ENCODE measurements at regions of chr17 and their contacts with region 1.

Region 1: DNA sequence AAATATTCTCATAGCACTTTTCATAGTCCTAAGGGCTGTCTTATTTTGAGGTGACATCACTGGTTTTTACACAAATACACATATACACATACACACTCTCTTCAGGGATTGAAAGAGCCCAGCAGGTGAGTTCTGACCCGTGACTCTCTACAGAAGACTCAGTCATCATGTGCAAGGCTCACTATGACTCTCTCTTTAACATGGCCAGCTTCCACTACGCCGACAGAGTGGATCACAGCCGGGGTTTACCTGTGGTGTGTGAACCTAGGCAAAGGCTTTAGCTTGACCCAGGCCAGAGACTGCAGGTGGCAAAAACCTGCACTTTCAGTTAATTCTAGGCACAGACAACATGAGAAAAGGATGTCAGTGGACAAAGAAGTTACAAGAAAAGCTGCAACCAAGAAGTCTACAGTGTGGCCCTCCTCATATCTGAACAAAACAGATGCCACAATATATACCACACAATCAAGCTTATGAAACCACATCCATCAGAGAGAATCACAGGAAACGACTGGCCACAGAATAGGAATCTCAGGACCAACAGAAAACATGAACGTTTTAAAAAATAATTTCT is 56.5 kb downstream of the CYTH1 start:
- DNase-seq: peak in 3 of 35 experiments; percentile 2 to 61 (median 29)
- ATAC-seq: peak; percentile 54 to 71 (median 59)
- H3K4me3 ChIP-seq: peak overlapping the region in 1 of 2 donors; percentile 52
- H3K4me3 Mint-ChIP-seq: peak overlapping the region; percentile 62 to 80 (median 74)
- H3K27ac ChIP-seq: peak overlapping the region; percentile 44
- H3K27ac Mint-ChIP-seq: peak overlapping the region; percentile 87 to 91
- H3K4me1 ChIP-seq: peaks cover 68 to 97% of the 10 kb centered on the region in 2 experiments
- H3K4me1 Mint-ChIP-seq: peaks cover 93% of the 10 kb centered on the region in 3 donors
- H3K27me3 ChIP-seq: no peaks in the 10 kb centered on the region
- H3K27me3 Mint-ChIP-seq: no peaks in the 10 kb centered on the region

Region 2: GRCh38 chr17:78641243-78641642 is 84.3 kb before region 1 on chr17:
- CTCF ChIA-PET with region 1: no interaction called
- POLR2A ChIA-PET with region 1: no interaction called
- DNase-seq: no peak
- ATAC-seq: no peak
- H3K4me3 ChIP-seq: no peak overlapping the region
- H3K4me3 Mint-ChIP-seq: no peak overlapping the region
- H3K27ac ChIP-seq: no peak overlapping the region
- H3K27ac Mint-ChIP-seq: no peak overlapping the region
- H3K4me1 ChIP-seq: peaks cover 0 to 9% of the 10 kb centered on the region in 2 experiments
- H3K4me1 Mint-ChIP-seq: peaks cover 13 to 24% (median 13%) of the 10 kb centered on the region in 3 donors
- H3K27me3 ChIP-seq: peaks cover 0 to 16% of the 10 kb centered on the region in 2 experiments
- H3K27me3 Mint-ChIP-seq: peaks cover 0 to 2% of the 10 kb centered on the region in 2 donors

Region 3: DNA sequence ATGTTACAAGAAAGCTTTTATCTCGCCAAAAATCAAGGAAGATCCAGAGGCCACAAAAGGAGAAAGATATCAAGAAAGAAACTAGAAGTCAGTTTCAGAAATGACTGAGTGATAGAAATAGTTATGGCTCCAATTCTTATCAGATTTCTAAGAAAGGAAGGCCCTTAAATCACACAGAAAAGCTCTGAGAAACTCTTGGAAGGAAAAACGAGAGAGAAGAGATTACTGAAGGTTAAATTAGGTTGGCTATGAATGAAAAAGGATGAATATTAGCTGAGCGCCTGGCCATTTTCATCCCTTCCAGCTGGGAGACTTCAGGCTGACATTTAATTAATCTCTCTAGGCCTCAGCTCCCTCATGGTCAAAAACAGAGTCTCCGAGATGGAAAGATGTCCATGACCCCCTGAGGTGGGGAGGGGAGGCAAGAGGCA is 15.8 kb before region 1 on chr17:
- CTCF ChIA-PET with region 1: interaction called in 1 of 2 experiments, 5 read pairs
- POLR2A ChIA-PET with region 1: interaction called, 4 to 11 read pairs
- DNase-seq: no peak
- ATAC-seq: no peak
- H3K4me3 ChIP-seq: no peak overlapping the region
- H3K4me3 Mint-ChIP-seq: peak overlapping the region; percentile 49 to 54 (median 50)
- H3K27ac ChIP-seq: peak overlapping the region; percentile 51
- H3K27ac Mint-ChIP-seq: peak overlapping the region; percentile 81 to 91
- H3K4me1 ChIP-seq: peaks cover 24 to 54% of the 10 kb centered on the region in 2 experiments
- H3K4me1 Mint-ChIP-seq: peaks cover 70 to 78% (median 75%) of the 10 kb centered on the region in 3 donors
- H3K27me3 ChIP-seq: no peaks in the 10 kb centered on the region
- H3K27me3 Mint-ChIP-seq: no peaks in the 10 kb centered on the region

Region 4: DNA sequence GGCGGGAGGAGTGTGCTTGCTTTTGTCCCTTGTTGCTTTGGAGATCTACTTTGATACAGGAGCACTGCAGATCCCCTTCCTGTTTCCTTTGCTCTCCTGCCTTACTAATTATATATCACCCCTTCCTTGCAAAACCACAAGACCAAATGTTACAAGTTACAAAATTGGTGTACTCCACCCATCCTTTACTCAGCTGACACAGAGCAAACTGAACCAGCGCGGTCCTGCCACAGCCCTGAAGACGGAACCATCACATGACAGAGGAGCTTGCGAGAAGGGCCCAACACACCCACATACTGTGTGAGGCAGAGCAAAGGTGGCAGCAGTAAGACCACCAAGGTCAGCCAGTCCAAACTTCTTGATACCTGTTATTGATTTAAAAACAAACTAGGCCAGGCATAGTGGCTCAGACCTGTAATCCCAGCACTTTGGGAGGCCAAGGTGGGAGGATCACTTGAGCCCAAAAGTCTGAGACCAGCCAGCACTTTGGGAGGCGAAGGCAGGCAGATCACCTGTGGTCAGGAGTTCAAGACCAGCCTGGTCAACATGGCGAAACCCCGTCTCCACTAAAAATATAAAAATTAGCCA is 23.3 kb after region 1 on chr17:
- CTCF ChIA-PET with region 1: interaction called in 1 of 2 experiments, 13 read pairs
- POLR2A ChIA-PET with region 1: interaction called in 1 of 2 experiments, 5 read pairs
- DNase-seq: peak; percentile 58 to 89 (median 79)
- ATAC-seq: peak; percentile 89 to 94 (median 93)
- H3K4me3 ChIP-seq: peak overlapping the region; percentile 35 to 66
- H3K4me3 Mint-ChIP-seq: peak overlapping the region; percentile 73 to 83 (median 74)
- H3K27ac ChIP-seq: peak overlapping the region; percentile 93
- H3K27ac Mint-ChIP-seq: peak overlapping the region; percentile 90 to 94
- H3K4me1 ChIP-seq: peaks cover 85 to 89% of the 10 kb centered on the region in 2 experiments
- H3K4me1 Mint-ChIP-seq: peaks cover 97 to 100% (median 97%) of the 10 kb centered on the region in 3 donors
- H3K27me3 ChIP-seq: no peaks in the 10 kb centered on the region
- H3K27me3 Mint-ChIP-seq: no peaks in the 10 kb centered on the region